ENCODE measurements at regions of chr3 and their contacts with region 1.

Region 1: DNA sequence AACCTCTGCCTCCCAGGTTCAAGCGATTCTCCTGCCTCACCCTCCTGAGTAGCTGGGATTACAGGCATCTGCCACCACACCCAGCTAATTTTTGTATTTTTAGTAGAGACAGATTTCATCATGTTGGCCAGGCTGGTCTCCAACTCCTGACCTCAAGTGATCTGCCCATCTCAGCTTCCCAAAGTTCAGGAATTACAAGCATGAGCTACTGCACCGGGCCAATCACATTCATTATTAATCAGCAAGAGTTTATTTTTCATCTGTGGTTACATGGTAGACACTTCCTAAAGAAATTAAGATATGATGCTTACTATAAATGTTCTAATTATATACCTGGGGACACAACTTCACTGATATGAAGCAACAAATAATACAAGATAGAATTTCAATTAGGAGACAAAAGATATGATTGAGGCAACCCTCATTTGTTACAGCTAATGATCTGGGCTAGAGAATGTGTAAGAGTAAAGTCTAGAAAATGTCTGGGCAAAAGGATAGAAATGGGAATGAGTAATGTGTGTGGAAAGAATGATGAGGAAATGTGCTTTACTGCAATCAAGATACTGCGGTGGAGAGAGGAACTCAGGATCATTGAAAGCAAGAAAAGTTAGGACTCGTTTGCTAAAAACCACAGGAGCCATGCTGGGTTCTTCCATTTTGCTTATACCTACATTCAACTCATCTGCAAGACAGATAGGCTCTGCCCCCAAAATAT is 366.8 kb downstream of the ZIC1 start:
- DNase-seq: no peak
- H3K4me3 ChIP-seq: no peak overlapping the region
- H3K27ac ChIP-seq: no peak overlapping the region
- H3K4me1 ChIP-seq: no peaks in the 10 kb centered on the region
- H3K27me3 ChIP-seq: no peaks in the 10 kb centered on the region
- CTCF ChIP-seq: no peak
- POLR2A ChIP-seq: no peak

Region 2: GRCh38 chr3:147793841-147794240 is 17.9 kb after region 1 on chr3:
- CTCF ChIA-PET with region 1: no interaction called
- POLR2A ChIA-PET with region 1: no interaction called
- dilution Hi-C with region 1: no loop called
- intact Hi-C with region 1: loop called (anchors 2 kb)
- DNase-seq: peak; percentile 30
- H3K4me3 ChIP-seq: no peak overlapping the region
- H3K27ac ChIP-seq: no peak overlapping the region
- H3K4me1 ChIP-seq: peaks cover 6% of the 10 kb centered on the region
- H3K27me3 ChIP-seq: no peaks in the 10 kb centered on the region
- CTCF ChIP-seq: no peak
- POLR2A ChIP-seq: no peak